HEK293 (cell line): ENCODE measurements at regions of chr16 and their contacts with region 1.

Region 1: GRCh38 chr16:54929090-54930004 is 1.3 kb upstream of the IRX5 start:
- H3K4me3 ChIP-seq: peak overlapping the region; percentile 69
- H3K27ac ChIP-seq: peak overlapping the region; percentile 100
- H3K4me1 ChIP-seq: peaks cover 12% of the 10 kb centered on the region; the same call in 1 of the 2 replicates
- CTCF ChIP-seq: peak; percentile 86

Region 2: DNA sequence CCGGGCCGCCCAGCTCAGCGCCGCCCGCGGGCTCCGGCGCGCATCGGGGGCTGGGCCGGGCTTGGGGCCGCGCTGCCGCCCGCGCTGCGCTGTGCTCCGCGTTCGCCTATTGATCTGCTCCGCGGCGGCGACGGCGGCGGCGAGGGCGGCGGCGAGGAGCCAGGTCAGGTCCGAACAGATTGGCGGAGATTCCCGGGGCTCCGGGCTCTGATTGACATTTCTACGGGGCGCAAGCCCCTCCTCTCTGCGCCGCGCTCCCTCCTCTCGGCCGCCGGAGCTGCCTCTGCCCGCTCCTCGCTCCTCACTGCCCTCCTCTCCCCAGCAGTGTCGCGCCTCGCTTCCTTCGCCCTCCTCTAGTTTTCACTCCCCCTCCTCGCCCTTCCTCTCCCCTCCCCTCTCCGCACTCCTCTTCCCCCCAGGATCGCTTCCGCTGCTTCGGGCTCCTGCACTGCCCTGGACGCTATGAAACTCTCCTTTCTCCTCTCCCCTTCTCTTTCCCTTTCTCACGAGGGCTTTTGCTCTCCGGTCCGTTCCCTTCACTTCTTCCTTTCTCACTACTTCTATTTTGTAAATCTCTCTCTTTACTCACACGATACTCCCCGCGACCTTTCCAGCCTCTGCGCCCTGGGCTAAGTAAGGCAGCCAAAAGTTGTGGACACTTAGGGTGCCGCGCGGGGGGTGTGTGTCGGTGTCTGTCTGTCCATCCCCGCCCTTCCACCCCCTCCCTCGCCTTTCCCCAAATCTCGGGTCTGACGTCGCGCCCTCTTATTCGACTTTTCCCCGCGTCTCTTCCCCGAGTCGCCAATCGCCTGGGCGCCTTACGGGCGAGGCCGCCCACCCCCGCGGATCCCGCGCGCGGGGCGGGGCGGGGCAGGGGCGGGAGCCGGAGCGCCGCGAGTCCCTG is 643.0 kb before region 1 on chr16 and contains the start of gene IRX3:
- CTCF ChIA-PET with region 1: no interaction called
- POLR2A ChIA-PET with region 1: interaction called, 23 read pairs
- H3K4me3 ChIP-seq: peak within 1 kb of the TSS; percentile 65
- H3K27ac ChIP-seq: peak within 1 kb of the TSS; percentile 98
- H3K4me1 ChIP-seq: 0 out of 2 replicates have a peak, but pooled peaks cover 2% of the 10 kb centered on the region
- CTCF ChIP-seq: peak; percentile 62